ENCODE measurements at regions of chr1 and their contacts with region 1.

Region 1: GRCh38 chr1:183699616-183700160 is 46.6 kb upstream of the APOBEC4 start:
- DNase-seq: peak; percentile 99
- ATAC-seq: peak; percentile 98
- H3K4me3 ChIP-seq: no peak overlapping the region
- H3K27ac ChIP-seq: peak overlapping the region; percentile 82
- H3K4me1 ChIP-seq: peaks cover 50% of the 10 kb centered on the region
- H3K27me3 ChIP-seq: no peaks in the 10 kb centered on the region
- CTCF ChIP-seq: no peak
- EP300 ChIP-seq: peak; percentile 89 to 94
- POLR2A ChIP-seq: no peak
- RAD21 ChIP-seq: no peak

Region 2: DNA sequence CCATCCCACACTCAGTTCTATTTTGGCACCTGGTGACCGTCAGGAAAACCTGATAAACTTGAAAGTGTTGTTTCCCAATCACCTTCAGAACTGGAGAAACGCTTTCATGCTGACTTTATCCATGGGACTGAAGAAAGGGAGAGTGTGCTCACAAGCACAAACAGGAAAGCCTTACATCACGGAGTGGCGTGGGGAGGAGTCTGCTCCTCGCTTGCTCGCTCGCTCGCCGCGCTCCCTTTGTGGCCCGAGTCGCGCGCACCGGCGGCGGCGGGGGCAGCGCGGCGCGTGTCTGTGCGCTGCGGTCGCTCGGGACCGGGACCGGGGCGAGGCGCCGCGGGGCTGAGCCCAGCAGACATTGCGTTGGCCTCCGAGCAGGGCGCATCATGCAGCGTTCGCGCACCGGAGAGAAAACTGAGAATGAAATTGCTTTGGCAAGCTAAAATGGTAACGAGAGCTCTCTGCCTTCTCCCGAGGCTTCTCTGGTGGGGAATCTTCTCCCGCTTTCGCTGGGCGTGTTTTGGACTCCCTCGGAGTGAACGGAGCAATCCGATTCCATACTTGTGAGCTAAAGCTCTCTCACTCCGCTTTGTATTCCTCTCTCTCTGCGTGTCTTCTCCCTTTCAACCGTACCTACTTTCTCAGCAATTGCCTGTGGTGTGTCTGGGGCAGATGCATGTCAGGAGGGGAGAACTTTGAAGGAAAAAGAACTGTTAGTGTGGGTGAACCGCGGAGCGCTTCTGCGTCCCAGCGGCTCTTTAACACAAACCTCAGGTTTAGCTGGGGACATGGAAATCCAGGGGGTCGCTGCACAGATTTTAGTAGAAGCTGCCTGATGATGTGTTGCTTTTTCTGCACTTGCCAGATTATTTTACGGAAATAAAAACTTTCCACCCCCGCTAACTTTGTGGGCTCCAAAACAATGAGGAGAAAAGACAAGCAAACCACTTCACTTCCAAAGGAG is 105.5 kb after region 1 on chr1 and contains the start of gene RGL1:
- CTCF ChIA-PET with region 1: no interaction called
- POLR2A ChIA-PET with region 1: interaction called, 3 read pairs
- in situ Hi-C with region 1: no loop called
- intact Hi-C with region 1: loop called (anchors 5 kb)
- DNase-seq: peak; percentile 61
- ATAC-seq: peak; percentile 91
- H3K4me3 ChIP-seq: peak within 1 kb of the TSS; percentile 71 to 83 (median 72)
- H3K27ac ChIP-seq: no peak within 1 kb of the TSS
- H3K4me1 ChIP-seq: peaks cover 30% of the 10 kb centered on the region
- H3K27me3 ChIP-seq: no peaks in the 10 kb centered on the region; a peak in 1 of 5 replicates
- CTCF ChIP-seq: no peak
- EP300 ChIP-seq: no peak
- POLR2A ChIP-seq: peak in 1 of 2 experiments; percentile 60; a peak in 2 of 4 replicates
- RAD21 ChIP-seq: 0 out of 2 replicates have a peak, but pooled peaks have one; percentile 24
- total RNA-seq, gene RGL1: 4.7 and 5.7 TPM in 2 replicates